ENCODE measurements at regions of chr3 and their contacts with region 1.

Region 1: GRCh38 chr3:13451301-13451673 is 28.8 kb upstream of the HDAC11 start:
- DNase-seq: no peak
- H3K4me3 ChIP-seq: peak overlapping the region; percentile 30 to 55 (median 52)
- H3K27ac ChIP-seq: peak overlapping the region; percentile 75 to 84 (median 82)
- H3K4me1 ChIP-seq: peaks cover 0 to 12% (median 5%) of the 10 kb centered on the region in 4 donors
- H3K27me3 ChIP-seq: no peaks in the 10 kb centered on the region
- CTCF ChIP-seq: no peak
- EP300 ChIP-seq: no peak
- POLR2A ChIP-seq: no peak

Region 2: GRCh38 chr3:13091898-13092611 is 359.2 kb before region 1 on chr3:
- intact Hi-C with region 1: loop called (anchors 1 kb)
- DNase-seq: peak; percentile 90
- H3K4me3 ChIP-seq: no peak overlapping the region
- H3K27ac ChIP-seq: no peak overlapping the region
- H3K4me1 ChIP-seq: peaks cover 0 to 10% (median 7%) of the 10 kb centered on the region in 4 donors
- H3K27me3 ChIP-seq: peaks cover 0 to 7% (median 0%) of the 10 kb centered on the region in 3 donors
- CTCF ChIP-seq: peak; percentile 66 to 94 (median 87)
- EP300 ChIP-seq: no peak
- POLR2A ChIP-seq: no peak

Region 3: DNA sequence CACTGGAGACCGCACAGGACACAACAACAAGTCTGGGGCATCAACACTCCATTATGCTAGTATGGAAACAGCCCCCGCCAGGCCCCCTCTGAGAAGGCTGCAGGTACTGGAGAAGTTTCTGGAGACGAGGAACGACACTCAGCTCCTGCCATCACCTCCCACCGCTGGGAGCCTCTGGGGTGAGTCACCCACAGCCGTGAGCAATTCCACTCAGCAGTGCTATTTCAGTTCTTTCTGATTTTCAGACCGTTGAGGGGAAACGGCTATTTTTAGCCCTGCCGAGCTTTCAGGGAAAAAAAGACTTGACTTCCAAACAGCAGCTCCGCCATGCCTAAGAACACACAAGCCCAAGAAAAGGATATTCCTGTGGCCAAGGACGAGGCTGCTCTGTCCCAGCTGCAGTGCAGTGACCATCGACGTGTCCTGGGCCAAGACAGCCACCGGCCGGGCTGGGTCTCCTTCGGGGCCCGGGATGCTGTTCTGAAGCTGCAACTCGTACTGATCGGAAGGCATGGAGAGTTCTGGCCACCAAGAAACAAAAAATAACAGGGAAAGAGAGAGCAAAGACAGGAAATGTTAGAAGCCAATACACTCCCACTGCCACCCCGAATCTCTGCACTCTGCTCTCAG is 72.0 kb before region 1 on chr3:
- intact Hi-C with region 1: no loop called
- DNase-seq: no peak
- H3K4me3 ChIP-seq: no peak overlapping the region
- H3K27ac ChIP-seq: peak overlapping the region in 2 of 4 donors; percentile 34 to 60
- H3K4me1 ChIP-seq: peaks cover 0 to 13% (median 6%) of the 10 kb centered on the region in 4 donors
- H3K27me3 ChIP-seq: no peaks in the 10 kb centered on the region
- CTCF ChIP-seq: no peak
- EP300 ChIP-seq: no peak
- POLR2A ChIP-seq: no peak

Region 4: GRCh38 chr3:13479581-13480339 is 28.5 kb after region 1 on chr3 and contains the start of gene HDAC11:
- intact Hi-C with region 1: loop called (anchors 1 kb)
- DNase-seq: peak; percentile 99
- H3K4me3 ChIP-seq: peak within 1 kb of the TSS; percentile 68 to 90 (median 80)
- H3K27ac ChIP-seq: peak within 1 kb of the TSS; percentile 94 to 97 (median 94)
- H3K4me1 ChIP-seq: peaks cover 0 to 24% (median 16%) of the 10 kb centered on the region in 4 donors
- H3K27me3 ChIP-seq: no peaks in the 10 kb centered on the region
- CTCF ChIP-seq: peak in 2 of 4 experiments; percentile 23 to 58
- EP300 ChIP-seq: no peak
- POLR2A ChIP-seq: peak; percentile 89 to 93
- total RNA-seq, gene HDAC11: 15.5 to 17.2 (median 16.7) TPM

Region 5: DNA sequence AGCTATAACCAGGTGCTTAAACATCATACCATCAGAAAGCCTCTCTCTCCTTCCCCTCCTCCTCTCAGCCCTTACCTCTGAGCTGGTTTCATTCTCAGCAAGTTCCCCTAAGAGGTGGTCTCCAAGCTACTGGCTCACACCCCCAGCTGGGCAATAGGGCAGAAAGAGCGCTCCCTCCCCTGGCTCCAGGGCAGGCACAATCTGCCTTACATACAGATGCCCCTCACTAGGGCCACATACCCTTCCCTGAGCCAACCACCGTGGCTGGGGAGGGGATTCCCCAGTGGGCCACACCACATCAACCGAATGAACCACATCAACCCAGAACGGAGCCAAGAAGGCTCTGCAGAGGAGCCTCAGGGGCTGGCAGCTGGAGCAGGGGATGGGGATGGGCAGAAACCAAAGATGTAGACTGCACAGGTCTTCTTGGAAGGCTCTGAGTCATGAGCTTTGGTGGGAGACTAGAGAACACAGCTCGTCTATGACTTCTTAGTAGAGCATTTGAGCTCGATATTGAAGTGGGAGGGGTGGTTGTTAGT is 93.1 kb after region 1 on chr3:
- intact Hi-C with region 1: no loop called
- DNase-seq: no peak
- H3K4me3 ChIP-seq: no peak overlapping the region
- H3K27ac ChIP-seq: peak overlapping the region in 2 of 4 donors; percentile 44 to 54
- H3K4me1 ChIP-seq: peaks cover 0 to 9% (median 6%) of the 10 kb centered on the region in 4 donors
- H3K27me3 ChIP-seq: peaks cover 9 to 19% (median 17%) of the 10 kb centered on the region in 3 donors
- CTCF ChIP-seq: no peak
- EP300 ChIP-seq: no peak
- POLR2A ChIP-seq: no peak

Region 6: DNA sequence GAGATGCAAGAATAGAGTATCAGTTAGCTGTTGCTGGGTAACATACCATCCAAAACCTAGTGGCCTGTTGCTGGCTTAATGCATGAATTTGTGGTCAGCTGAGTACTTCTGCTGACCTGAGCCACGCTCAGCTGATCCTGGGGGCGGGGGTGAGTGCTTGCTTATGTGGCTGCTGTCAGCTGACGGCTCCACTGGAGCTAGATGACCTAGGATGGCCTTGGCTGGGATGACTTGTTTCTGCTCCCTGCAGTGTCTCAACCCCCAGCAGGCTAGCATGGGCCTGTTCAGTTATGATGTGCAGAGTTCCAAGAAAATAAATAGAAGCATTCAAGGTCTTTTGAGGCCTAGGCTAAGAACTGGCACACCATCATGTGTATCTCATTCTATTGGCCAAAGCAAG is 161.5 kb after region 1 on chr3:
- intact Hi-C with region 1: no loop called
- DNase-seq: peak; percentile 76
- H3K4me3 ChIP-seq: no peak overlapping the region
- H3K27ac ChIP-seq: no peak overlapping the region
- H3K4me1 ChIP-seq: no peaks in the 10 kb centered on the region
- H3K27me3 ChIP-seq: no peaks in the 10 kb centered on the region
- CTCF ChIP-seq: no peak
- EP300 ChIP-seq: no peak
- POLR2A ChIP-seq: no peak